ENCODE measurements at regions of chr6 and their contacts with region 1.

Region 1: GRCh38 chr6:167781066-167781767 is 45.5 kb upstream of the AFDN start:
- DNase-seq: no peak
- ATAC-seq: no peak
- H3K4me3 ChIP-seq: no peak overlapping the region
- H3K4me3 Mint-ChIP-seq: no peak overlapping the region
- H3K27ac ChIP-seq: no peak overlapping the region
- H3K27ac Mint-ChIP-seq: no peak overlapping the region
- H3K4me1 ChIP-seq: no peaks in the 10 kb centered on the region
- H3K4me1 Mint-ChIP-seq: no peaks in the 10 kb centered on the region
- H3K27me3 ChIP-seq: no peaks in the 10 kb centered on the region
- H3K27me3 Mint-ChIP-seq: peaks cover 3% of the 10 kb centered on the region
- CTCF ChIP-seq: no peak

Region 2: DNA sequence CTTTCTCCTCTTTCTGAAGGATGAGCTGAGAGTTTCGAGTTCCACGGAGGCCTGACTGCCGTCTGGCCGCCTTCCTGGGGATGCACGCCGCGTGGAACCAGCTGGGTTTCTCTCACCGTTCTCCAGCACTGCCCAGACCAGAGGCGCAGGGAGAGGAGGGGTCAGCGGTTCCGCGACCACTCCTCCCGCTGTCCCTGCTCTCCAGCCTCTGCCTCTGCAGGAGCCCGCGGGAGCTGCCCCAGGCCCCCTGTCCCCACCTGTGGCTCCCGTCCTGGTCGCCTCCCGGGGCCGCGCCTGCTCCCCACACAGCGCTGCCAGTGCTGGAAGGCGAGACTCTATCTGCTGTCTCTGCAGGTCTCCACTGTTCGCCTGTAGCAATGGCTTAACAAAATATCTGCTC is 61.3 kb before region 1 on chr6:
- CTCF ChIA-PET with region 1: no interaction called
- POLR2A ChIA-PET with region 1: no interaction called
- intact Hi-C with region 1: loop called in 1 of 2 experiments (anchors 5 kb)
- DNase-seq: peak in 1 of 9 experiments; percentile 40
- ATAC-seq: no peak
- H3K4me3 ChIP-seq: no peak overlapping the region
- H3K4me3 Mint-ChIP-seq: no peak overlapping the region
- H3K27ac ChIP-seq: no peak overlapping the region
- H3K27ac Mint-ChIP-seq: no peak overlapping the region
- H3K4me1 ChIP-seq: no peaks in the 10 kb centered on the region
- H3K4me1 Mint-ChIP-seq: no peaks in the 10 kb centered on the region
- H3K27me3 ChIP-seq: no peaks in the 10 kb centered on the region
- H3K27me3 Mint-ChIP-seq: peaks cover 17% of the 10 kb centered on the region
- CTCF ChIP-seq: no peak